CD8-positive, alpha-beta T cell (primary cell): ENCODE measurements at regions of chr1 and their contacts with region 1.

Region 1: GRCh38 chr1:153510984-153511410 is 24.8 kb downstream of the S100A6 start:
- DNase-seq: peak; percentile 53 to 89 (median 82)
- ATAC-seq: peak; percentile 90
- H3K4me3 ChIP-seq: no peak overlapping the region
- H3K4me3 Mint-ChIP-seq: no peak overlapping the region
- H3K27ac ChIP-seq: no peak overlapping the region
- H3K27ac Mint-ChIP-seq: no peak overlapping the region
- H3K4me1 ChIP-seq: no peaks in the 10 kb centered on the region
- H3K4me1 Mint-ChIP-seq: no peaks in the 10 kb centered on the region
- H3K27me3 ChIP-seq: no peaks in the 10 kb centered on the region
- H3K27me3 Mint-ChIP-seq: no peaks in the 10 kb centered on the region
- CTCF ChIP-seq: peak; percentile 94

Region 2: GRCh38 chr1:153526132-153526543 is 15.1 kb after region 1 on chr1:
- CTCF ChIA-PET with region 1: interaction called, 93 read pairs
- POLR2A ChIA-PET with region 1: no interaction called
- intact Hi-C with region 1: no loop called
- DNase-seq: no peak
- ATAC-seq: no peak
- H3K4me3 ChIP-seq: no peak overlapping the region
- H3K4me3 Mint-ChIP-seq: no peak overlapping the region
- H3K27ac ChIP-seq: no peak overlapping the region
- H3K27ac Mint-ChIP-seq: no peak overlapping the region
- H3K4me1 ChIP-seq: peaks cover 5% of the 10 kb centered on the region
- H3K4me1 Mint-ChIP-seq: peaks cover 8% of the 10 kb centered on the region
- H3K27me3 ChIP-seq: no peaks in the 10 kb centered on the region
- H3K27me3 Mint-ChIP-seq: no peaks in the 10 kb centered on the region
- CTCF ChIP-seq: no peak

Region 3: GRCh38 chr1:153553830-153554541 is 43.0 kb after region 1 on chr1:
- CTCF ChIA-PET with region 1: interaction called, 15 read pairs
- POLR2A ChIA-PET with region 1: no interaction called
- intact Hi-C with region 1: no loop called
- DNase-seq: no peak
- ATAC-seq: no peak
- H3K4me3 ChIP-seq: no peak overlapping the region
- H3K4me3 Mint-ChIP-seq: no peak overlapping the region
- H3K27ac ChIP-seq: no peak overlapping the region
- H3K27ac Mint-ChIP-seq: no peak overlapping the region
- H3K4me1 ChIP-seq: no peaks in the 10 kb centered on the region
- H3K4me1 Mint-ChIP-seq: no peaks in the 10 kb centered on the region
- H3K27me3 ChIP-seq: no peaks in the 10 kb centered on the region
- H3K27me3 Mint-ChIP-seq: no peaks in the 10 kb centered on the region
- CTCF ChIP-seq: no peak

Region 4: DNA sequence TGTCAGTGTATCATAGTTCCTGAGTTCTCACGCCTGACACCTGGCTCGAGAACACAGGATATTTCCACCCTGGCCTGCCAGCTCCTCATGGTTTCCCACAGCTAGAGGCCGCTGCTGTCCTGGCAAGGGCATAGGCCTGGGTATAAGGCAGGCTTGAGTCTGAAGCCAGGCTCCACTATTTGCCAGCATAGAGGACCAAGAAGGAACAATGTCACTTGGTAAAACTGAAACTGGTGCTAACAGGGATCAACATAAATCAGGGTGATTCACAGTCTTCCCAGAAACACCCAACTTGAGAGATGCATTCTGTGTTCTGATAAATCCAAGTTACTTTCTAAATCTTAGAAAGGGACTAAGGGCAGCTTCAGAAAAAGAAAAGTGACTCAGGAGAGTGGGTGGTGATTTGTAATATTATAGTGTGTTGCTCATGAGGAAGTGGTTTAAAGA is 61.6 kb after region 1 on chr1:
- CTCF ChIA-PET with region 1: interaction called, 237 read pairs
- POLR2A ChIA-PET with region 1: interaction called, 3 read pairs
- intact Hi-C with region 1: loop called (anchors 1 kb)
- DNase-seq: peak in 7 of 9 experiments; percentile 27 to 60 (median 39)
- ATAC-seq: peak; percentile 52
- H3K4me3 ChIP-seq: no peak overlapping the region
- H3K4me3 Mint-ChIP-seq: no peak overlapping the region
- H3K27ac ChIP-seq: no peak overlapping the region
- H3K27ac Mint-ChIP-seq: no peak overlapping the region
- H3K4me1 ChIP-seq: peaks cover 3% of the 10 kb centered on the region
- H3K4me1 Mint-ChIP-seq: peaks cover 11% of the 10 kb centered on the region
- H3K27me3 ChIP-seq: no peaks in the 10 kb centered on the region
- H3K27me3 Mint-ChIP-seq: peaks cover 14% of the 10 kb centered on the region
- CTCF ChIP-seq: no peak

Region 5: GRCh38 chr1:153617675-153618074 is 106.7 kb after region 1 on chr1:
- CTCF ChIA-PET with region 1: interaction called, 99 read pairs
- POLR2A ChIA-PET with region 1: no interaction called
- intact Hi-C with region 1: loop called (anchors 1 kb)
- DNase-seq: peak in 6 of 9 experiments; percentile 22 to 83 (median 70)
- ATAC-seq: peak; percentile 85
- H3K4me3 ChIP-seq: no peak overlapping the region
- H3K4me3 Mint-ChIP-seq: no peak overlapping the region
- H3K27ac ChIP-seq: no peak overlapping the region
- H3K27ac Mint-ChIP-seq: no peak overlapping the region
- H3K4me1 ChIP-seq: no peaks in the 10 kb centered on the region
- H3K4me1 Mint-ChIP-seq: peaks cover 5% of the 10 kb centered on the region
- H3K27me3 ChIP-seq: no peaks in the 10 kb centered on the region
- H3K27me3 Mint-ChIP-seq: no peaks in the 10 kb centered on the region
- CTCF ChIP-seq: peak; percentile 46

Region 6: DNA sequence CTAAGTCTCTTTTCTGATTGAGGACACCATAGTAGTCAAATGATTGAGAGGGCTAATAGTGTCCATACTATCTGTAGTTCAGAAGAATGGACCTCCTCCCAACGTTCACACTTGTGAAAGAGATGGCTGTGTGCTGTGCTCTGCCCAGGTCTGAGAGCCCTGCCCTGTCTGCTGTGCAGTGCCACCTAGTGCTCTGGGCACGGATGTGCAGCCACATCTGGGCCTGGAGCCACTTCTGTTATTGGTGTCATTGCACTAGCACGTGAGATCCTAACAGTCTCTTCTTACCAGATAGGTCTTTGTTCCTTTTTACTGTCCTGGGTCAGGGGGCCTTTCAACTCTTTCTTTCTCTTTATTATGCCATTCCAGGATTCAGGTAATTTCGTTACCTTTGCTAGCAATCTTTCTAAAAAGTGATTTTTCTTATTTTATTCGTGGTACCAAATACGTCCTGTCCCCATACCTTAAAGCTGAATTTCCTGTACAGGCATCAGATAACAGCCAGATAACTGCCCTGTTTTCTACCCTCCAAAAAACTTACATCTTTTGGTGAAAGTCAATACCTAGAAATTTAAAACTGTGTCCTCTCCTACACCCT is 238.5 kb after region 1 on chr1:
- CTCF ChIA-PET with region 1: interaction called, 16 read pairs
- POLR2A ChIA-PET with region 1: no interaction called
- intact Hi-C with region 1: loop called (anchors 1 kb)
- DNase-seq: peak; percentile 66 to 85 (median 77)
- ATAC-seq: peak; percentile 100
- H3K4me3 ChIP-seq: no peak overlapping the region
- H3K4me3 Mint-ChIP-seq: no peak overlapping the region
- H3K27ac ChIP-seq: no peak overlapping the region
- H3K27ac Mint-ChIP-seq: no peak overlapping the region
- H3K4me1 ChIP-seq: no peaks in the 10 kb centered on the region
- H3K4me1 Mint-ChIP-seq: peaks cover 4% of the 10 kb centered on the region
- H3K27me3 ChIP-seq: no peaks in the 10 kb centered on the region
- H3K27me3 Mint-ChIP-seq: no peaks in the 10 kb centered on the region
- CTCF ChIP-seq: peak; percentile 97